ENCODE measurements at regions of chr1 and their contacts with region 1.

Region 1: GRCh38 chr1:86704458-86704971 is at the start of gene SH3GLB1:
- DNase-seq: peak; percentile 78 to 97 (median 91)

Region 2: DNA sequence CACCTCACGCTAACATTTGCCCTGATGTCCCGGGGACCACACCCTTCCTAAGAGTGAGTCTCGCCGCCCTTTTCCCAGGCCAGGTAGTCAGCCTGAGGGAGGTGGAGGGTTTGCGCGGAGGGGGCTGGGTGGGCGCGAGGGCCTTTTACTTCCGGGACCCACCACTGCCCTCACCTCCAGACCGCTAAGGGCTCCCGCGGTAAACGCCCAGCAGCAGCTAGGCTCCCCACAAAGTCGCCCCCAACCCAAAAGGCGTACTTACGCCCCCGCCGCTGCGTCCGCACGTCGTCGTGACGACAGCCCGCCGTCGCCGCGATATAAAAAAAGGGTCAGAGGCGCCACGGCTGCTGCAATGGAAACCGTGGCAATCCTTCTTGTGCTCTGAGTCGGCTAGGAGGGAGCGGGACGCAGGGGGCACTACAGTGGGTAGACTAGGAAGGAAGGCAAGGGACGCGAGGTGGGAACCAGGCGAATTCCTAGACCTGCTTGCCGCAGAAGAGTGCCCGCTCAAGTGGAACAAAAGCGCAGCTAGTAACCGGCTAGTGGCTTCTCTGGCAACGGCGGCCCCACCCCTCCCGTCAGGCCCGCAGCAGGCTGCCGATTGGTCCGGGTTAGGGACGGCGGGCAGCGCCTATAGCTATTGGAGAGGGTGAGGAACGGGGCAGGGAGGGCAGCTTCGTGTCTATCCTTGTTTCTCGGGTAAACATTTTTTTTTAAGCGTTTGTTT is 308.6 kb before region 1 on chr1 and contains the start of gene ODF2L:
- intact Hi-C with region 1: loop called (anchors 10 kb)
- DNase-seq: peak; percentile 85 to 98 (median 95)

Region 3: DNA sequence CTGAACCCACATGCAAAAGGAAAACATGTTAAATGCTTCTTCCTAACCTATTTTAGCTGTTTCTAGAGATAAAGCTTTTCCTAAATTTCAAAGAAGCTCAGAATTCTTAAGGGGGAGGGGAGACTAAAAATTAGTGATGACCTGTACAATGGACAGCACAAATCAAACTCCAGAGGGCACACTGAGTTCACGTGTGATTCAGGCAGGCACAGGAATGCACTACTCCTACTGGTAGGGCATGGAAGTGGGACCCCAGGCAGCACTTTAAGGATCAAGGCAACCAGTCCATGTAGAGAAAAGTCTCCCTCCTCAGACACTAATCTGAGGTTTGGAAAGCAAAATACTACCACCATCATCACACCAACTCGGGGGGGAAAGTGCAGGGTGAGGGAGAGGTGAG is 188.9 kb before region 1 on chr1:
- intact Hi-C with region 1: no loop called
- DNase-seq: peak in 35 of 42 donors; percentile 17 to 83 (median 56)

Region 4: GRCh38 chr1:86596741-86597290 is 107.7 kb before region 1 on chr1:
- intact Hi-C with region 1: no loop called
- DNase-seq: peak in 4 of 42 donors; percentile 11 to 44 (median 25)

Region 5: DNA sequence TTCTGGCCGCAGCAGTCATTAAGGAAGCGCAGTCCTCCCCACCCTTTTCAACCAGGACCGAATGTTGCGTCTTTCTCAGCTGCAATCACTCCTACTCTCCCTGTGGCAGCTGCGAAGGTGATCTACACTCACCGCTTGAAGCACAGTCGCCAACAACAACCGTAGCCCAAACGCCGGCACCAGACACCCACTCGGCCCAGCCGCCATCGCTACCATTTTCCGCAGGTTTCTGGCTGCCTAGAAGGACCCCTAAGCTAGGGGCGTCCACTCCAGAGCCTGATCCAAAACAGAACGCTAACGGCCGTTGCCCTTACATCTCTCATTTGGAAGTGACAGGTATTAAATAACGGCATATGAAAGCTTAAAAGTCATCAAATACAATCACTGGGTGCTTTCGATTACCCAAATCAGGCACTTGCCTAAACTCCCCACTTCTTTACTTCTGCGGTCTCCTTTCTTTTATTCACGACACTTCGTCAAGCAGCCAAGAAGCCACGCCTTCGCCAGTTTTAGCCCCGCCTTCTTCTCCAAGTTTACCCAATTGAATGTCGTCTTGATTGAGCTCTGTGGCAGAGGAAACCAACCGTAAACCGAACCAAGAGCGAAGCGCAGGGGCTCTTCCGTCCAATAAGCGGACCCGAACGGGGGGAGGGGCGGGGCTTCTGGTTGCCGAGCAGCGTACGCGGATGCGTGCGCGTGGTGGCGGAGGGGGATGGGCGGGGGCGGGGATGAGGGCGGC is 209.6 kb after region 1 on chr1 and contains the start of gene SELENOF:
- intact Hi-C with region 1: loop called (anchors 10 kb)
- DNase-seq: peak; percentile 94 to 99 (median 98)